ENCODE measurements at regions of chr11 and their contacts with region 1.

Region 1: GRCh38 chr11:9534791-9535781 is 38.4 kb upstream of the WEE1 start:
- DNase-seq: peak; percentile 64 to 97
- H3K4me3 ChIP-seq: no peak overlapping the region
- H3K27ac ChIP-seq: no peak overlapping the region
- H3K4me1 ChIP-seq: peaks cover 0 to 13% (median 5%) of the 10 kb centered on the region in 4 experiments; a peak in 5 of 7 replicates
- H3K27me3 ChIP-seq: no peaks in the 10 kb centered on the region
- CTCF ChIP-seq: peak; percentile 81 to 94 (median 94)
- EP300 ChIP-seq: no peak
- POLR2A ChIP-seq: no peak
- RAD21 ChIP-seq: peak; percentile 71 to 73

Region 2: GRCh38 chr11:9506489-9507276 is 28.4 kb before region 1 on chr11:
- CTCF ChIA-PET with region 1: interaction called, 11 read pairs
- POLR2A ChIA-PET with region 1: no interaction called
- DNase-seq: peak; percentile 79 to 86
- H3K4me3 ChIP-seq: peak overlapping the region in 1 of 4 experiments; percentile 37; a peak in 2 of 8 replicates
- H3K27ac ChIP-seq: no peak overlapping the region; the same call in 1 of the 2 replicates
- H3K4me1 ChIP-seq: peaks cover 0 to 6% (median 3%) of the 10 kb centered on the region in 4 experiments; a peak in 5 of 7 replicates
- H3K27me3 ChIP-seq: no peaks in the 10 kb centered on the region
- CTCF ChIP-seq: peak; percentile 24 to 94 (median 82)
- EP300 ChIP-seq: no peak
- POLR2A ChIP-seq: no peak
- RAD21 ChIP-seq: peak; percentile 92 to 93

Region 3: GRCh38 chr11:9550191-9550628 is 15.1 kb after region 1 on chr11:
- CTCF ChIA-PET with region 1: interaction called, 17 read pairs
- POLR2A ChIA-PET with region 1: no interaction called
- DNase-seq: peak in 1 of 2 experiments; percentile 29
- H3K4me3 ChIP-seq: no peak overlapping the region
- H3K27ac ChIP-seq: no peak overlapping the region
- H3K4me1 ChIP-seq: no peaks in the 10 kb centered on the region
- H3K27me3 ChIP-seq: no peaks in the 10 kb centered on the region
- CTCF ChIP-seq: no peak
- EP300 ChIP-seq: no peak
- POLR2A ChIP-seq: no peak
- RAD21 ChIP-seq: no peak

Region 4: DNA sequence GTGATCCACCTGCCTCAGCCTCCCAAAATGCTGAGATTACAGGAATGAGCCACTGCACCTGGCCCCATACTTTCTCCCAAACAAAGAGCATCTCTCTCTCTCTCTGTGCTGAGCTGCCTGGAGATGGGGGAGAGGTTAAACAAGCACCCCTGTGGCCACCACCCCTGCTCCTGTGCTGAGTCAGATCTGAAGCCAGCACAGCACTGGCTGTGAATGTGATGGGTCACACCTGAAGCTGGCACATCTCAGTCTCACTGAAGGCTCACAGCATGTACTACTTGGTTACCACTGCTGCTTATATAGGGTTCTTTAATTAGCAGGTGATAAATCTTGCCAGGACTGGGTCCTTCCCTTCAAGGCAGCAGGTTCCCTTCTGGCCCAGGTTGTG is 27.6 kb after region 1 on chr11:
- CTCF ChIA-PET with region 1: interaction called, 26 read pairs
- POLR2A ChIA-PET with region 1: interaction called, 3 read pairs
- DNase-seq: no peak
- H3K4me3 ChIP-seq: no peak overlapping the region
- H3K27ac ChIP-seq: no peak overlapping the region
- H3K4me1 ChIP-seq: peaks cover 0 to 8% (median 4%) of the 10 kb centered on the region in 4 experiments; a peak in 4 of 7 replicates
- H3K27me3 ChIP-seq: no peaks in the 10 kb centered on the region; a peak in 2 of 7 replicates
- CTCF ChIP-seq: no peak
- EP300 ChIP-seq: no peak
- POLR2A ChIP-seq: no peak
- RAD21 ChIP-seq: no peak

Region 5: GRCh38 chr11:9613118-9613829 is 78.2 kb after region 1 on chr11:
- CTCF ChIA-PET with region 1: interaction called, 12 read pairs
- POLR2A ChIA-PET with region 1: interaction called, 3 read pairs
- DNase-seq: peak; percentile 83 to 96
- H3K4me3 ChIP-seq: peak overlapping the region; percentile 26 to 55 (median 42)
- H3K27ac ChIP-seq: peak overlapping the region; percentile 57; the same call in 1 of the 2 replicates
- H3K4me1 ChIP-seq: peaks cover 0 to 7% (median 2%) of the 10 kb centered on the region in 4 experiments; a peak in 4 of 7 replicates
- H3K27me3 ChIP-seq: peaks cover 0 to 2% (median 0%) of the 10 kb centered on the region in 4 experiments; a peak in 3 of 7 replicates
- CTCF ChIP-seq: peak; percentile 85 to 90 (median 89)
- EP300 ChIP-seq: peak in 1 of 2 experiments; percentile 76; a peak in 1 of 3 replicates
- POLR2A ChIP-seq: peak in 1 of 2 experiments; percentile 63; a peak in 1 of 3 replicates
- RAD21 ChIP-seq: peak; percentile 78 to 81

Region 6: GRCh38 chr11:9663699-9664275 is 128.7 kb after region 1 on chr11 and contains the start of gene SWAP70:
- CTCF ChIA-PET with region 1: no interaction called
- POLR2A ChIA-PET with region 1: no interaction called
- DNase-seq: peak; percentile 63 to 96
- H3K4me3 ChIP-seq: peak within 1 kb of the TSS; percentile 66 to 98 (median 94)
- H3K27ac ChIP-seq: peak within 1 kb of the TSS; percentile 82; the same call in 1 of the 2 replicates
- H3K4me1 ChIP-seq: no peaks in the 10 kb centered on the region; a peak in 2 of 7 replicates
- H3K27me3 ChIP-seq: no peaks in the 10 kb centered on the region
- CTCF ChIP-seq: peak in 2 of 3 experiments; percentile 25 to 32; a peak in 2 of 4 replicates
- EP300 ChIP-seq: no peak
- POLR2A ChIP-seq: peak in 1 of 2 experiments; percentile 63; a peak in 2 of 3 replicates
- RAD21 ChIP-seq: peak in 1 of 2 experiments; percentile 37; a peak in 1 of 4 replicates
- total RNA-seq, gene SWAP70: 37.5 TPM in 2 replicates

Region 7: GRCh38 chr11:9703280-9703679 is 168.2 kb after region 1 on chr11:
- CTCF ChIA-PET with region 1: no interaction called
- POLR2A ChIA-PET with region 1: no interaction called
- DNase-seq: no peak
- H3K4me3 ChIP-seq: no peak overlapping the region
- H3K27ac ChIP-seq: no peak overlapping the region
- H3K4me1 ChIP-seq: no peaks in the 10 kb centered on the region
- H3K27me3 ChIP-seq: no peaks in the 10 kb centered on the region
- CTCF ChIP-seq: no peak
- EP300 ChIP-seq: no peak
- POLR2A ChIP-seq: no peak
- RAD21 ChIP-seq: no peak

Measured in H1 (cell line).